ENCODE measurements at regions of chr1 and their contacts with region 1.

Region 1: GRCh38 chr1:220113136-220113695 is 19.3 kb downstream of the IARS2 start:
- DNase-seq: peak; percentile 50
- ATAC-seq: peak; percentile 65
- H3K4me3 Mint-ChIP-seq: no peak overlapping the region
- H3K27ac Mint-ChIP-seq: no peak overlapping the region
- H3K4me1 Mint-ChIP-seq: peaks cover 4% of the 10 kb centered on the region
- H3K27me3 Mint-ChIP-seq: no peaks in the 10 kb centered on the region

Region 2: DNA sequence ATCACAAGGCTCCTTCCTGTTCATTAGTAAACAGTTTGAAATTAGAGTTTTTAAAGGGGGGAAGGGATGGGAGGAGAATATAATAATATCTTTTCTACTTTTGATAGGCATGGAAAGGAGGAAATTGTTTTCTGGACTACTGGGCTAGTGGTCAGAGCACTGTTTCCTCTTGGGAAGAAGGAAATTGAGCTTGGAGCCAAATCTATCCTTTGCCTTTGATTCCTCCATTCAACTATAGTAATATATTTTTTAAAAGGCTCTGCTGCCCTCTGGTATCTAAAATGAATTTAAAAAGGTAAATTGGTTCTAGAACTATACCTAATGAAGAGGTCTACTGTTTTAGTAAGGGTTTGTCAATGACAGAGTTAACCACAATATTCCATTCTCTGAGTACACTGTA is 13.4 kb before region 1 on chr1:
- CTCF ChIA-PET with region 1: interaction called, 13 read pairs
- POLR2A ChIA-PET with region 1: interaction called, 3 read pairs
- DNase-seq: no peak
- ATAC-seq: no peak
- H3K4me3 Mint-ChIP-seq: no peak overlapping the region
- H3K27ac Mint-ChIP-seq: no peak overlapping the region
- H3K4me1 Mint-ChIP-seq: peaks cover 10% of the 10 kb centered on the region
- H3K27me3 Mint-ChIP-seq: no peaks in the 10 kb centered on the region

Region 3: GRCh38 chr1:220123889-220124288 is 10.7 kb after region 1 on chr1:
- CTCF ChIA-PET with region 1: interaction called, 35 read pairs
- POLR2A ChIA-PET with region 1: interaction called, 4 read pairs
- DNase-seq: peak; percentile 34
- ATAC-seq: no peak
- H3K4me3 Mint-ChIP-seq: no peak overlapping the region
- H3K27ac Mint-ChIP-seq: no peak overlapping the region
- H3K4me1 Mint-ChIP-seq: peaks cover 6% of the 10 kb centered on the region
- H3K27me3 Mint-ChIP-seq: no peaks in the 10 kb centered on the region

Measured in activated CD8-positive, alpha-beta T cell treated with anti-CD3 and anti-CD28 coated beads, Interleukin-2, amount 10 ng/mL, durations not matched to agents 7 days and 5 days (primary cell).